Activated CD8-positive, alpha-beta T cell treated with anti-CD3 and anti-CD28 coated beads, Interleukin-2, amount 10 ng/mL, durations not matched to agents 7 days and 5 days (primary cell): ENCODE measurements at regions of chr7 and their contacts with region 1.

Region 1: DNA sequence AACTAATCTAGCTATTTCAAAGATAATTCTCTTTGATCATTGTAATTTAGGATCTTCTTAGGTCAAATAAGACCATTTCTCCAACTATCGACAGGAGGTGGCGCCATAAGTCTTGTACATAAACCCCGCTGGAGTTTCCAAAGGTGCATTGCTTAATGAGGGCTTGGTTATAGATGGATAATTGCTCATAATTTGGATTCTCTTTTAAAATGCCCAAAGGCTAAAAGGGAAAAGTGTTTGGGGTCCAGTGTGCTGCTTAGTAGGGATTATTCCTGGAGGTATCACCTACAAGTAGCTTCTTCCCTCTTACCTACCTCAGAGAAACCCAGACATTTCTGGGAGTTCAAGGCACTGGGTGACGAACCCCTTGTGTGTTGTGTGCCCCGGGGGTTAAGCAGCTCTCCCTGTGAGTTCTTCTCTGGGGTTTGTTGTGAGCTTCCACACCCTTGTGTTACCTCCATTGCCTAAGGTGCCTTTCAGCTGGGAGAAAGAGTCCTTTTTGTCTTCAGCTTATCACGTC is 75.2 kb downstream of the PAXIP1 start:
- DNase-seq: peak; percentile 88
- ATAC-seq: peak; percentile 69
- H3K4me3 Mint-ChIP-seq: peak overlapping the region; percentile 96
- H3K27ac Mint-ChIP-seq: peak overlapping the region; percentile 92
- H3K4me1 Mint-ChIP-seq: peaks cover 25% of the 10 kb centered on the region
- H3K27me3 Mint-ChIP-seq: peaks cover 6% of the 10 kb centered on the region

Region 2: DNA sequence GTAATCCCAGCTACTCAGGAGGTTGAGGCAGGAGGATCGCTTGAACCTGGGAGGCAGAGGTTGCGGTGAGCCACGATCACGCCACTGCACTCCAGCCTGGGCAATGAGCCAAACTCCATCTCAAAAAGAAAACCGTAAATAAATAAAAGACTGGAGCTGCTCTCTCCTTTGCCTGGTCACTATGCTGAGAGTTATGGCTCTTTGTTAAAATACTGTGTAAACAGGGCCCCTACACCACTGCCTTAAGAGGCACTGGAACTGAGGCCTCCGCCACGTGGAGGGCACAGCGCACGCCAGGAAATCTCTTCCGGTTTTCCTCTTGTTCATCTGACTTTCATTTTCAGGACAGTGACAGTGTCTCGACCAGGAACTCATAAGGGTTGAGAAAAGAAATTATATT is 48.1 kb before region 1 on chr7:
- CTCF ChIA-PET with region 1: no interaction called
- POLR2A ChIA-PET with region 1: no interaction called
- DNase-seq: no peak
- ATAC-seq: no peak
- H3K4me3 Mint-ChIP-seq: no peak overlapping the region
- H3K27ac Mint-ChIP-seq: no peak overlapping the region
- H3K4me1 Mint-ChIP-seq: no peaks in the 10 kb centered on the region
- H3K27me3 Mint-ChIP-seq: no peaks in the 10 kb centered on the region

Region 3: GRCh38 chr7:154953006-154953684 is 25.5 kb after region 1 on chr7:
- CTCF ChIA-PET with region 1: interaction called, 39 read pairs
- POLR2A ChIA-PET with region 1: no interaction called
- DNase-seq: peak; percentile 67
- ATAC-seq: peak; percentile 47
- H3K4me3 Mint-ChIP-seq: no peak overlapping the region
- H3K27ac Mint-ChIP-seq: no peak overlapping the region
- H3K4me1 Mint-ChIP-seq: no peaks in the 10 kb centered on the region
- H3K27me3 Mint-ChIP-seq: no peaks in the 10 kb centered on the region

Region 4: GRCh38 chr7:155009570-155010157 is 82.0 kb after region 1 on chr7:
- CTCF ChIA-PET with region 1: interaction called, 13 read pairs
- POLR2A ChIA-PET with region 1: no interaction called
- DNase-seq: peak; percentile 53
- ATAC-seq: peak; percentile 58
- H3K4me3 Mint-ChIP-seq: no peak overlapping the region
- H3K27ac Mint-ChIP-seq: no peak overlapping the region
- H3K4me1 Mint-ChIP-seq: peaks cover 3% of the 10 kb centered on the region
- H3K27me3 Mint-ChIP-seq: peaks cover 2% of the 10 kb centered on the region

Region 5: DNA sequence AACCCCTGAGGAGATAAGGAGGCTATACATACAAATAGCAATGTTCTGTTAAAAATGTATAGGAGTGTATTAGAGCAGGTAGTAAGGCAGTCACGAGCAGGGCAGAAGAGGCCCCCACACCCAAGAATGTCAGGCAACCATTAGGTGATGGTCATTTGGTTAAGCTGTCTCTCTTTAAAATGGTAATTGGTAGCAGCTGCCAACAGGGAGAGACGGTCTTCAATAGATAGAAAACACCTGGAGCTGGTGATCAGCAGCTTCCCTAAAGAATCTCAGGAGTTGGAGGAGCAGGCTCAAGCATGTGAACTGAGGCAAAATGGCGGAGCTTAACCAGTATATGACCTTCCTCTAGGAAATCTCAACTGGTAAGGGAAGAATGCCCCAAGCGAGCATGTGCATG is 116.1 kb after region 1 on chr7:
- CTCF ChIA-PET with region 1: no interaction called
- POLR2A ChIA-PET with region 1: no interaction called
- DNase-seq: no peak
- ATAC-seq: no peak
- H3K4me3 Mint-ChIP-seq: no peak overlapping the region
- H3K27ac Mint-ChIP-seq: no peak overlapping the region
- H3K4me1 Mint-ChIP-seq: no peaks in the 10 kb centered on the region
- H3K27me3 Mint-ChIP-seq: peaks cover 7% of the 10 kb centered on the region

Region 6: DNA sequence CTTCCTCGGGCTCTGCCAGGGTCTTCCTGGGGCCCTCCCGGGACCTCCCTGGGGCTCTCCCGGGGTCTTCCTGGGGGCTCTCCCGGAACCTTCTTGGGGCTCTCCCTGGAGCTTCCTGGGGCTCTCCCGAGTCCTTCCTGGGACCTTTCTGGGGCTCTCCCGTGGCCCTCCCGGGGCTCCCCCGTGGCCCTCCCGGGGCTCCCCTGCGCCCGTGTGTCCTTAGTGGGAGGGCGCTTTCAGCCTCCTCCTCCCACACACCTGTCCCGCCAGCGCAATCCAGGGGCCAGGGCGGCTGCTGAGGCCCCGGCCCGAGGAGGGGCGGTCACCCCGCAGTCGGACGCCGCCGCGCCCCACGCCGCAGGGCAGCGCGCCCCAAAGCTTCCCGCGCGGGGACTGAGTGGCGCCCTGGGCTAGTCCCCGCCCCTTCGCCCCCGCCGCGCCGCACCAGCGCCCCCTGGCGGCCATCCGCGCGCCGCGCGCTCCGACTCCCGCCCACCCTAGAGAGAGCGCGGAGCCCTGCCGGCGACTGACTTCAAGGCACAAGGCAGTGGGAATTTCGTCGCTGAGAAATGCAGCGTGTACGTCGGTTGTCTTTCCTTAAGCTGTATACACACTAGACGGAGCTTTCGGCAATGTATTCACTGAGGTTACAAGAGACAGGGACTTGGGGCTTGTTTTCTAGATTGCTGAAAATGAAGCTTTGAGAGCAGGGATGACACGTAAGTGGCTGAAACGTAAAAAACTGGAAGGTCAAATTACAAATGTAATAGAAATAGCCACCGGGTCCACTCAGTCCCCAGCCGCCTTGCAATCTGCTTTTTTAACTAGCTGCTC is 417.1 kb after region 1 on chr7:
- CTCF ChIA-PET with region 1: interaction called, 53 read pairs
- POLR2A ChIA-PET with region 1: no interaction called
- DNase-seq: peak; percentile 83
- ATAC-seq: peak; percentile 98
- H3K4me3 Mint-ChIP-seq: peak overlapping the region; percentile 48
- H3K27ac Mint-ChIP-seq: no peak overlapping the region
- H3K4me1 Mint-ChIP-seq: peaks cover 8% of the 10 kb centered on the region
- H3K27me3 Mint-ChIP-seq: peaks cover 26% of the 10 kb centered on the region

Region 7: GRCh38 chr7:155426543-155427410 is 499.1 kb after region 1 on chr7:
- CTCF ChIA-PET with region 1: no interaction called
- POLR2A ChIA-PET with region 1: no interaction called
- DNase-seq: no peak
- ATAC-seq: no peak
- H3K4me3 Mint-ChIP-seq: no peak overlapping the region
- H3K27ac Mint-ChIP-seq: no peak overlapping the region
- H3K4me1 Mint-ChIP-seq: no peaks in the 10 kb centered on the region
- H3K27me3 Mint-ChIP-seq: no peaks in the 10 kb centered on the region

Region 8: DNA sequence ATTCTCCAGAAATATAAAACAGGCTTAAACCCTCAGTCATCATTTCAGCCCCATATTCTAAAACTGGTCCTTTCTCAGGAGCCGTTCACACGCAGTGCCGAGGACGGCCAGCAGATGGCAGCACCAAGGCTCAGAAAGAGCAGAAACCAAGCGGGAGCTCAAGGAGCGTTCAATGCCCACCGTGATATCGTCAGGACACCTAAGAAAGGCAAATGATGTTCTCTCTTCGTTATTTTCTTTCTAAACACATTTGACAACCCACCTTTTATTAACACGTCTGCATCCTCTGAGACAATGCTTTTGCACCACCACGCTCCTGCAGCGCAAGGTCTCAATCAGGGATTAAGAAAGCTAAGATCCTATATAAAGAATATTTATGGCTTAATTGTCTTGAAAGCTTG is 671.1 kb after region 1 on chr7:
- CTCF ChIA-PET with region 1: interaction called, 14 read pairs
- POLR2A ChIA-PET with region 1: no interaction called
- DNase-seq: peak; percentile 90
- ATAC-seq: peak; percentile 90
- H3K4me3 Mint-ChIP-seq: no peak overlapping the region
- H3K27ac Mint-ChIP-seq: no peak overlapping the region
- H3K4me1 Mint-ChIP-seq: peaks cover 7% of the 10 kb centered on the region
- H3K27me3 Mint-ChIP-seq: peaks cover 40% of the 10 kb centered on the region